Aorta (tissue), 5 donors: ENCODE measurements at regions of chr2 and their contacts with region 1.

Region 1: DNA sequence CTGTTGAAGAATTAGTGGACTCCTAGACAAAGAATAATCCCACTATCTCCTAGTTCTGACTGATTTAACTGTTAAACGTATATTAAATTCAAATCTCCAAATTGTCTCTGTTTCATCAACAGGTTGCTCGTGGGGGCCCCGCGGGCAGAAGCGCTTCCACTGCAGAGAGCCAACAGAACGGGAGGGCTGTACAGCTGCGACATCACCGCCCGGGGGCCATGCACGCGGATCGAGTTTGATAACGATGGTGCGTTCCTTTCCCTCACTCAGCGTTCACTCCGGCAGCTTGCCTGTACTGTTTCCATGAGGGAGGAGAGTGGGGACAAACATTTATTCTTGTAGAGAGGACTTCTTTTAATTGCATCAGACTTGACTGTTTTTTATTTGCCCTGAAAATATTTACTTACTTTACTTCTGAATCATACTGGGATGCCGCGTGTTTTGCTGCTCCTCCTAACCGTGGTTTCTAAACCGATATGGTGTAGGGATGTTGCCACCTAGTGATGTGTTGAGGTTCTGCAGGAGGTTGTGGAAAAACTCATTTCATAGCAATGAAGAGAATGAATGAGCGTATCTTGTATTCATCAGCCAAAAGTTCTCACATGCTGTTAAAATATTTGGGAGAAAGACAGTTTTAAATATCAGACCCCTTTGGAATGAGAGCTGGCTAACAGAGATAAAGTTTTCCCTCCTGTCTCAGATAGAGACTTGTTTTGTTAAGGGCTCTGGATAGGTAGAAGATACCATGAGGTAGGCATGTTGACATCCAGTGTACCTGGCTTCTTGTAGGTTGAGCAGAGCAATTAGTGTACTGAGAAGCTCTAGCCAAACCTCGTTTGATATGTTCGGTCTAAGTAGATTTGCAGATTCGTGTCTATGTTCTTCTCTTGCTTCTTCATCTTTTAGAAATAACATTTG is 38.3 kb downstream of the ITGA6 start:
- DNase-seq: peak; percentile 67 to 82
- ATAC-seq: peak; percentile 90
- H3K4me3 ChIP-seq: no peak overlapping the region
- H3K27ac ChIP-seq: no peak overlapping the region
- H3K4me1 ChIP-seq: no peaks in the 10 kb centered on the region
- H3K27me3 ChIP-seq: no peaks in the 10 kb centered on the region

Region 2: GRCh38 chr2:172172513-172173173 is 293.0 kb before region 1 on chr2:
- intact Hi-C with region 1: loop called (anchors 1 to 2 kb)
- DNase-seq: peak; percentile 62 to 92
- ATAC-seq: peak; percentile 96
- H3K4me3 ChIP-seq: peak overlapping the region; percentile 7 to 54
- H3K27ac ChIP-seq: no peak overlapping the region
- H3K4me1 ChIP-seq: no peaks in the 10 kb centered on the region
- H3K27me3 ChIP-seq: no peaks in the 10 kb centered on the region

Region 3: GRCh38 chr2:172200495-172201085 is 265.1 kb before region 1 on chr2:
- intact Hi-C with region 1: loop called in 1 of 2 experiments (anchors 10 kb)
- DNase-seq: no peak
- ATAC-seq: no peak
- H3K4me3 ChIP-seq: no peak overlapping the region
- H3K27ac ChIP-seq: no peak overlapping the region
- H3K4me1 ChIP-seq: no peaks in the 10 kb centered on the region
- H3K27me3 ChIP-seq: no peaks in the 10 kb centered on the region

Region 4: GRCh38 chr2:172540421-172540820 is 74.7 kb after region 1 on chr2:
- intact Hi-C with region 1: no loop called
- DNase-seq: no peak
- ATAC-seq: no peak
- H3K4me3 ChIP-seq: no peak overlapping the region
- H3K27ac ChIP-seq: no peak overlapping the region
- H3K4me1 ChIP-seq: no peaks in the 10 kb centered on the region
- H3K27me3 ChIP-seq: no peaks in the 10 kb centered on the region